ENCODE measurements at regions of chr3 and their contacts with region 1.

Region 1: DNA sequence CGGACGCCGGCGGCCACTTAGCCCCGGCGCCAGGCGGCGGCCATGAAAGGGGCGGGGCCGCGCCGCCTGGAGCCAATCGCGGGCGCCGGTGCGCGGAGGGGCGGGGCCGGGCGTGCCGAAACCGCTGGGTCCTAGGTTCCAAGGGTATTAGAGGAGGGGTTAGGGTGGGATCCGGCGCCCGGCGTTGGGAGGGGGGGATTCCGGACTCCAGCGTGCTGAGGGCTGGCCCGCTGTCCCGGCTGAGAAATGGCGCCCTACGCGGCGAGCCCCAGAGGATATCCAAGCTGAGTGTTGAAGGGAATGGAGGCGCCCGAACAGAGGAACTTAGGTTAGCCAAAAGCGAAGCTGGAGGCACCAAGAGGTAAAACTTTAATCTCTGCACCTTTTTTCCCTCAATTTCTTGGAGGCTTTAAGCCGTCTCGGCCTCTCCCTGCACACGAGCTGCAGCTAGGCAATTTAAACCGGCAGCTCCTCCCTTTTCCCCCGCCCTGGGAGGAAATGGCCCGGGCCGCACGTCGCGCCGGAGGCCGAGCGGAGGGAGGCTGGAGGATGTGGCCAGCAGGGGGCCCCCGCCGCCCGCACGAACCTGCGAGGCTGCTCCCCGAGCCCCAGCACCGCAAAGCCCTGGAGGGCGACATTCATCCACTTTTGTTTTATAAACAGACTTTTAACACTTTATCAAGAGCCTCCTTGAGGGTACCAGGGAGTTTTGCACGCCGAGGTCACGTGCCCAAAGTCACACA is at the start of gene XXYLT1:
- DNase-seq: peak; percentile 95
- H3K4me3 Mint-ChIP-seq: peak within 1 kb of the TSS; percentile 81
- H3K27ac Mint-ChIP-seq: peak within 1 kb of the TSS; percentile 75
- H3K4me1 Mint-ChIP-seq: peaks cover 21% of the 10 kb centered on the region
- H3K27me3 Mint-ChIP-seq: no peaks in the 10 kb centered on the region
- total RNA-seq, gene XXYLT1: 3.3 to 4.4 TPM

Region 2: GRCh38 chr3:194682694-194683310 is 588.5 kb before region 1 on chr3:
- CTCF ChIA-PET with region 1: interaction called, 19 read pairs
- POLR2A ChIA-PET with region 1: interaction called, 5 read pairs
- intact Hi-C with region 1: no loop called
- DNase-seq: peak; percentile 77
- H3K4me3 Mint-ChIP-seq: no peak overlapping the region
- H3K27ac Mint-ChIP-seq: no peak overlapping the region
- H3K4me1 Mint-ChIP-seq: peaks cover 39% of the 10 kb centered on the region
- H3K27me3 Mint-ChIP-seq: peaks cover 24% of the 10 kb centered on the region

Region 3: GRCh38 chr3:195038161-195038560 is 233.1 kb before region 1 on chr3:
- CTCF ChIA-PET with region 1: no interaction called
- POLR2A ChIA-PET with region 1: no interaction called
- intact Hi-C with region 1: no loop called
- DNase-seq: no peak
- H3K4me3 Mint-ChIP-seq: no peak overlapping the region
- H3K27ac Mint-ChIP-seq: no peak overlapping the region
- H3K4me1 Mint-ChIP-seq: no peaks in the 10 kb centered on the region
- H3K27me3 Mint-ChIP-seq: peaks cover 6% of the 10 kb centered on the region

Region 4: GRCh38 chr3:195259475-195260279 is 11.6 kb before region 1 on chr3:
- CTCF ChIA-PET with region 1: interaction called, 40 read pairs
- POLR2A ChIA-PET with region 1: interaction called, 3 read pairs
- intact Hi-C with region 1: loop called (anchors 1 kb)
- DNase-seq: peak; percentile 90
- H3K4me3 Mint-ChIP-seq: peak overlapping the region; percentile 57
- H3K27ac Mint-ChIP-seq: peak overlapping the region; percentile 42
- H3K4me1 Mint-ChIP-seq: peaks cover 14% of the 10 kb centered on the region
- H3K27me3 Mint-ChIP-seq: no peaks in the 10 kb centered on the region

Region 5: GRCh38 chr3:195416795-195417194 is 145.5 kb after region 1 on chr3:
- CTCF ChIA-PET with region 1: no interaction called
- POLR2A ChIA-PET with region 1: no interaction called
- intact Hi-C with region 1: no loop called
- DNase-seq: no peak
- H3K4me3 Mint-ChIP-seq: no peak overlapping the region
- H3K27ac Mint-ChIP-seq: no peak overlapping the region
- H3K4me1 Mint-ChIP-seq: peaks cover 38% of the 10 kb centered on the region
- H3K27me3 Mint-ChIP-seq: no peaks in the 10 kb centered on the region

Region 6: DNA sequence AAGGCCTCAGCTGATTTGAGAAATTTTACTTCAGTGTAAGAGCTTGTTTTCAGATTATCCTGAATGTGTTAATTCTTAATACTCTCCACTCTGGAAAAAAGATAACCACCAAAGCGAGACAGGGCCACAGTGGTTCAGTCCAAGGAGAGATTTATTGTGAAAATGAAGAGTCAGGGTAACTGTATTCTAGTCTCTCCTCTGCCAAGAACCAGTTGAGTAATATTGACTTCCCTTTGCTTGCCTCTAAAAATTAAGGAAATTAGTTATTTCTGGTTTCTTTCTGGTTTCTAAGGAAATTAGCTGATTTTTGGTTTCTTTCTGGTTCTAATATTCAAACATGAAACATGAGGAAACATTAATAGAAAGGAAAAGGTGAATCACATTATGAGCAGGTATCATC is 236.9 kb after region 1 on chr3:
- CTCF ChIA-PET with region 1: interaction called, 10 read pairs
- POLR2A ChIA-PET with region 1: interaction called, 4 read pairs
- intact Hi-C with region 1: no loop called
- DNase-seq: no peak
- H3K4me3 Mint-ChIP-seq: no peak overlapping the region
- H3K27ac Mint-ChIP-seq: peak overlapping the region; percentile 57
- H3K4me1 Mint-ChIP-seq: peaks cover 21% of the 10 kb centered on the region
- H3K27me3 Mint-ChIP-seq: no peaks in the 10 kb centered on the region

Region 7: GRCh38 chr3:195532834-195533233 is 261.5 kb after region 1 on chr3:
- CTCF ChIA-PET with region 1: interaction called, 277 read pairs
- POLR2A ChIA-PET with region 1: interaction called, 3 read pairs
- intact Hi-C with region 1: loop called (anchors 1 kb)
- DNase-seq: no peak
- H3K4me3 Mint-ChIP-seq: no peak overlapping the region
- H3K27ac Mint-ChIP-seq: peak overlapping the region; percentile 7
- H3K4me1 Mint-ChIP-seq: peaks cover 72% of the 10 kb centered on the region
- H3K27me3 Mint-ChIP-seq: no peaks in the 10 kb centered on the region

Region 8: GRCh38 chr3:195558602-195559001 is 287.3 kb after region 1 on chr3:
- CTCF ChIA-PET with region 1: interaction called, 15 read pairs
- POLR2A ChIA-PET with region 1: no interaction called
- intact Hi-C with region 1: no loop called
- DNase-seq: no peak
- H3K4me3 Mint-ChIP-seq: no peak overlapping the region
- H3K27ac Mint-ChIP-seq: no peak overlapping the region
- H3K4me1 Mint-ChIP-seq: peaks cover 25% of the 10 kb centered on the region
- H3K27me3 Mint-ChIP-seq: no peaks in the 10 kb centered on the region

Measured in activated CD4-positive, alpha-beta memory T cell treated with anti-CD3 and anti-CD28 coated beads for 36 hours (primary cell).